ENCODE measurements at regions of chr15 and their contacts with region 1.

Region 1: DNA sequence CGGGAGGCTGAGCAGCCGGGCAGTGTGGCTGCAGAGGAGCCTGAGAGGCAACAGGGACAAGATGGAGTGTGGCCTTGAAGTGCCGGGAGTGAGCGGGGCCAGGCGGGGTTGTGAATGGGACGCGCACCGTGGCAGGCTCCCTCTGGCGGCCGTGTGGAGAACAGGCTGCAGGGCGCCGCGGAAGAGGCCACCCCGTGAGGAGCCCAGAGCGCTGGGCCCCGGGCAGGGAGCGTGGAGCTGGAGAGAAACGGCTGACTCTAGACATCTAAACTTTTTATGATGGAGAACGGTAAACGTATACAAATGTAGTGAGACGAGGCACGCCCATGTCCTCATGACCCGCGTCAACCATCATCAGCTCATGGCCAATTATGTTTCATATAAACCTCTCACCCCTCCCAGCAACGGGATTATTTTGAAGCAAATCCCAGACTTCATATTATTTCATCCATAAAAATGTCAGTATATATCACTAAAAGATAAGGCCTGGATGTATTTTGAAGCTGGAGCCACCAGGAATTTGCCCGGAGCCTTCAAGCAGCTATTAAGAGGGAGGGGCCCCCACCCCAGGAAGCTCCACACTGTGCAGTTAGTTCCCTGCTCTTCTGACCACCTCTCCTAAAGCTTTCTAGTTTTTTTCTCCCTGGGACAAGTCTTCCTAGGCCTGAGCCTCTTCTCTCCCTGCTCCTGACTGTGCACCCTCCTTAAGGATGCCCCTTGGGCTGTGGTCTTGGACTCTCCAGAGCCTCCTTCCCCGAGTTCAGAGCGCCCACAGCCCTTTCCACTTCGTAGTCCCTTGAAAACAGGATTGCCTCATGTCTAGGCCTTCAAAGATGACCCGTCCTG is 149.4 kb downstream of the SMAD6 start:
- H3K4me3 ChIP-seq: no peak overlapping the region
- H3K27ac ChIP-seq: peak overlapping the region; percentile 42
- H3K4me1 ChIP-seq: peaks cover 7% of the 10 kb centered on the region
- CTCF ChIP-seq: peak; percentile 99

Region 2: GRCh38 chr15:66619151-66619903 is 232.1 kb before region 1 on chr15:
- CTCF ChIA-PET with region 1: interaction called, 51 read pairs
- POLR2A ChIA-PET with region 1: interaction called, 9 read pairs
- H3K4me3 ChIP-seq: no peak overlapping the region
- H3K27ac ChIP-seq: no peak overlapping the region
- H3K4me1 ChIP-seq: no peaks in the 10 kb centered on the region
- CTCF ChIP-seq: peak; percentile 75

Region 3: GRCh38 chr15:66707310-66708082 is 144.0 kb before region 1 on chr15:
- CTCF ChIA-PET with region 1: interaction called, 37 read pairs
- POLR2A ChIA-PET with region 1: interaction called, 30 read pairs
- H3K4me3 ChIP-seq: no peak overlapping the region
- H3K27ac ChIP-seq: peak overlapping the region; percentile 27
- H3K4me1 ChIP-seq: peaks cover 32% of the 10 kb centered on the region
- CTCF ChIP-seq: peak; percentile 61; the same call in 1 of the 2 replicates

Region 4: GRCh38 chr15:66789029-66790025 is 62.1 kb before region 1 on chr15:
- CTCF ChIA-PET with region 1: interaction called, 84 read pairs
- POLR2A ChIA-PET with region 1: interaction called, 4 read pairs
- H3K4me3 ChIP-seq: no peak overlapping the region
- H3K27ac ChIP-seq: no peak overlapping the region
- H3K4me1 ChIP-seq: no peaks in the 10 kb centered on the region
- CTCF ChIP-seq: peak; percentile 56

Region 5: DNA sequence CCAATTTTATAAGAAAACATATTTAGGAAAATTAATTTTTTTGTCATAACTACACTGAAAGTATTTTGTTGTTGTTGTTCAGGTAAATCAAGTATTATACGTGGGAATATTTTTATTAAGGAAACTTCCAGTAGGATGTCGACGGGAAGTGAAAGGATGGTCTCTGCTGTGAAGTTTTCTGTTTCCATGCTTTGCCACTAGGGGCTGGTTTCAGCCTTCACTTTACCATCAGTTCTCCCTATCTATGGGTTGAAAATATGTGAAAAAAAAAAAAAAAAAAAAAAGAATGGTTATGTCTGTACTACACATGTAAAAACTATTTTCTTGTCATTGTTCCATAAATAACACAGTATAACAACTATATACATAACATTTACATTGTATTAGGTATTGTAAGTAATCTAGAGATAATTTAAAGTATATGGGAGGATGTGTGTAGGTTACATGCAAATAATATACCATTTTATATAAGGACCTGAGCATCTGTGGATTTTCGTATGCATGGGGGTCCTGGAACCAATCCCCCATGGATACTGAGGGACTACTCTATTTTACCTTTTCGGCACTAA is 12.7 kb before region 1 on chr15:
- CTCF ChIA-PET with region 1: interaction called, 61 read pairs
- POLR2A ChIA-PET with region 1: interaction called, 6 read pairs
- H3K4me3 ChIP-seq: no peak overlapping the region
- H3K27ac ChIP-seq: no peak overlapping the region
- H3K4me1 ChIP-seq: no peaks in the 10 kb centered on the region
- CTCF ChIP-seq: peak; percentile 39; the same call in 1 of the 2 replicates

Region 6: GRCh38 chr15:66883322-66883911 is 32.0 kb after region 1 on chr15:
- CTCF ChIA-PET with region 1: interaction called, 10 read pairs
- POLR2A ChIA-PET with region 1: interaction called, 3 read pairs
- H3K4me3 ChIP-seq: no peak overlapping the region
- H3K27ac ChIP-seq: peak overlapping the region; percentile 66
- H3K4me1 ChIP-seq: peaks cover 25% of the 10 kb centered on the region
- CTCF ChIP-seq: no peak

Region 7: DNA sequence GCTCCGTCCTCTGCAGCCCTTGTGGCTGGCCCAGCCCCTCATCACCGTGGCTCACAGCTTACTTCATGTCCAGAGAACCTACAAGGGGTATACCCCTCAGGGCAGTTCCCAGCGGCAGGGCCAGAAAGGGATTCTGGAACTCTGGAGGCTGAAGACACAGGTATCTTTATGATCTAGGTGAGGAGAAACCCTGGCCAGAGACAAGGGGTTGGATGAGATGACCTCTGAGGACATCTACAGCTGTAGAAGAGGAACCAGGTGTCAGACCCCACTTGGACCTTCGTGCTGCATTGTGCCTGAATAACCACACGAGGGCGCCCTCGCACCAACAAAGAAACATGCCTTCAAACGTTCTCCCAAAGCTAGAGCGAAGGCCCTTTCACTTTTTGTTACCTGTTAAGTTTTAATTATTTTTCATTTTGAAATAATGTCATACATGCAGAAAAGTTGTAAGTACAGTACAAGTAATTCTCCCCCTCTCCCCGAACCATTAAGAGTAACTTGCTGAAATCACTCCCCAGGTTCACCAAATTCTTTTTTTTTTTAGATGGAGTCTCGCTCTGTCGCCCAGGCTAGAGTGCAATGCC is 95.2 kb after region 1 on chr15:
- CTCF ChIA-PET with region 1: no interaction called
- POLR2A ChIA-PET with region 1: no interaction called
- H3K4me3 ChIP-seq: no peak overlapping the region
- H3K27ac ChIP-seq: no peak overlapping the region
- H3K4me1 ChIP-seq: no peaks in the 10 kb centered on the region
- CTCF ChIP-seq: peak; percentile 86